Activated CD4-positive, alpha-beta T cell treated with anti-CD3 and anti-CD28 coated beads, Interleukin-2, amount 10 ng/mL, durations not matched to agents 24 days and 14 days (primary cell): ENCODE measurements at regions of chr3 and their contacts with region 1.

Region 1: GRCh38 chr3:141905129-141905528 is 28.7 kb downstream of the ATP1B3 start:
- DNase-seq: no peak
- H3K4me3 Mint-ChIP-seq: no peak overlapping the region
- H3K27ac Mint-ChIP-seq: peak overlapping the region; percentile 76
- H3K4me1 Mint-ChIP-seq: peaks cover 23% of the 10 kb centered on the region
- H3K27me3 Mint-ChIP-seq: no peaks in the 10 kb centered on the region

Region 2: DNA sequence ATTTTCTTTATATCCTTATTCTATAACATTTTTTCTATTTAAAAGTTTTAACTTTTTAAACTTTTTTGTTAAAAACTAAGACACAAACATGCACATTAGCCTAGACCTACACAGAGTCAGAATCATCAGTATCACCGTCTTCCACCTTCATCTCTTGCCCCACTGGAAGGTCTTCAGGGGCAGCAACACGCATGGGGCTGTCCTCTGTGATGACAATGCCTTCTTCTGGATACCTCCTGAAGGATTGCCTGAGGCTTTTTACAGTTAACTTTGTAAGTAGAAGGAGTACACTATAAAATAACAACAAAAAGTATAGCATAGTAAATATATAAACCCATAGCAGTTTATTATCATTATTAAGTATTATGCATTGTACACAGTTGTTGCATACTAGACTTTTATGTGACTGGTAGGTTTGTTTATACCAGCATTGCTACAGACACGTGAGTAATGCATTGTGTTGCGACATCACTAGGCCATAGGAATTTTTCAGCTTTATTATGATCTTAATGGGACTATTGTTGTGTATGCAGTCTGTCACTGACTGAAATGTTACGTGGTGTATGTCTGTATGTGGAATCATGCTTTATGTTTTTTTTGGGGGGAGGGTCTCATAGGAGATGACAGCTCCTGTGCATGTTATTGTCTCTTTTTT is 10.5 kb before region 1 on chr3:
- intact Hi-C with region 1: loop called (anchors 2 kb)
- DNase-seq: no peak
- H3K4me3 Mint-ChIP-seq: no peak overlapping the region
- H3K27ac Mint-ChIP-seq: peak overlapping the region; percentile 62
- H3K4me1 Mint-ChIP-seq: peaks cover 37% of the 10 kb centered on the region
- H3K27me3 Mint-ChIP-seq: no peaks in the 10 kb centered on the region